ENCODE measurements at regions of chr12 and their contacts with region 1.

Region 1: GRCh38 chr12:111268738-111269572 is 99.9 kb downstream of the PHETA1 start:
- DNase-seq: no peak
- H3K4me3 ChIP-seq: no peak overlapping the region
- H3K27ac ChIP-seq: no peak overlapping the region
- H3K4me1 ChIP-seq: no peaks in the 10 kb centered on the region
- H3K27me3 ChIP-seq: peaks cover 7% of the 10 kb centered on the region
- CTCF ChIP-seq: peak; percentile 48 to 58

Region 2: GRCh38 chr12:110883251-110883650 is 385.7 kb before region 1 on chr12:
- CTCF ChIA-PET with region 1: no interaction called
- dilution Hi-C with region 1: loop called (anchors 5 kb)
- in situ Hi-C with region 1: no loop called
- intact Hi-C with region 1: no loop called
- DNase-seq: no peak
- H3K4me3 ChIP-seq: no peak overlapping the region
- H3K27ac ChIP-seq: no peak overlapping the region
- H3K4me1 ChIP-seq: no peaks in the 10 kb centered on the region
- H3K27me3 ChIP-seq: no peaks in the 10 kb centered on the region
- CTCF ChIP-seq: no peak

Region 3: GRCh38 chr12:111211910-111212757 is 56.8 kb before region 1 on chr12:
- CTCF ChIA-PET with region 1: no interaction called
- dilution Hi-C with region 1: no loop called
- in situ Hi-C with region 1: no loop called
- intact Hi-C with region 1: no loop called
- DNase-seq: no peak
- H3K4me3 ChIP-seq: no peak overlapping the region
- H3K27ac ChIP-seq: no peak overlapping the region
- H3K4me1 ChIP-seq: no peaks in the 10 kb centered on the region
- H3K27me3 ChIP-seq: peaks cover 3% of the 10 kb centered on the region
- CTCF ChIP-seq: no peak

Region 4: GRCh38 chr12:111242184-111242583 is 26.8 kb before region 1 on chr12:
- CTCF ChIA-PET with region 1: no interaction called
- dilution Hi-C with region 1: no loop called
- in situ Hi-C with region 1: no loop called
- intact Hi-C with region 1: no loop called
- DNase-seq: no peak
- H3K4me3 ChIP-seq: no peak overlapping the region
- H3K27ac ChIP-seq: no peak overlapping the region
- H3K4me1 ChIP-seq: no peaks in the 10 kb centered on the region
- H3K27me3 ChIP-seq: peaks cover 1% of the 10 kb centered on the region
- CTCF ChIP-seq: no peak

Region 5: GRCh38 chr12:111347891-111348644 is 79.1 kb after region 1 on chr12:
- CTCF ChIA-PET with region 1: no interaction called
- dilution Hi-C with region 1: loop called (anchors 5 kb)
- in situ Hi-C with region 1: no loop called
- intact Hi-C with region 1: no loop called
- DNase-seq: no peak
- H3K4me3 ChIP-seq: no peak overlapping the region
- H3K27ac ChIP-seq: no peak overlapping the region
- H3K4me1 ChIP-seq: no peaks in the 10 kb centered on the region
- H3K27me3 ChIP-seq: no peaks in the 10 kb centered on the region
- CTCF ChIP-seq: no peak

Measured in mammary epithelial cell (primary cell).